ENCODE measurements at regions of chr9 and their contacts with region 1.

Region 1: GRCh38 chr9:104991144-104991953 is 63.4 kb upstream of the ABCA1 start:
- DNase-seq: peak; percentile 89 to 95 (median 94)
- ATAC-seq: peak; percentile 95
- H3K4me3 ChIP-seq: peak overlapping the region; percentile 12
- H3K4me1 ChIP-seq: peaks cover 15% of the 10 kb centered on the region
- CTCF ChIP-seq: no peak

Region 2: GRCh38 chr9:104927912-104928740 is 63.2 kb before region 1 on chr9 and contains the start of gene ABCA1:
- intact Hi-C with region 1: loop called in 1 of 2 experiments (anchors 5 kb)
- DNase-seq: peak; percentile 91 to 97 (median 95)
- ATAC-seq: peak; percentile 81
- H3K4me3 ChIP-seq: peak within 1 kb of the TSS; percentile 90
- H3K4me1 ChIP-seq: peaks cover 7% of the 10 kb centered on the region
- CTCF ChIP-seq: no peak
- total RNA-seq, gene ABCA1: 26.6 to 111 (median 36.8) TPM

Measured in mucosa of descending colon (tissue), 3 donors.